ENCODE measurements at regions of chr1 and their contacts with region 1.

Region 1: GRCh38 chr1:59150577-59151391 is 146.1 kb upstream of the FGGY start:
- DNase-seq: peak; percentile 82 to 92
- H3K4me3 ChIP-seq: peak overlapping the region; percentile 48
- H3K27ac ChIP-seq: peak overlapping the region; percentile 72
- H3K4me1 ChIP-seq: peaks cover 66% of the 10 kb centered on the region
- H3K27me3 ChIP-seq: no peaks in the 10 kb centered on the region
- CTCF ChIP-seq: no peak

Region 2: GRCh38 chr1:59375321-59376220 is 224.8 kb after region 1 on chr1:
- CTCF ChIA-PET with region 1: interaction called, 13 read pairs
- POLR2A ChIA-PET with region 1: no interaction called
- intact Hi-C with region 1: no loop called
- DNase-seq: peak; percentile 25 to 54
- H3K4me3 ChIP-seq: no peak overlapping the region
- H3K27ac ChIP-seq: no peak overlapping the region
- H3K4me1 ChIP-seq: no peaks in the 10 kb centered on the region
- H3K27me3 ChIP-seq: no peaks in the 10 kb centered on the region
- CTCF ChIP-seq: no peak

Region 3: DNA sequence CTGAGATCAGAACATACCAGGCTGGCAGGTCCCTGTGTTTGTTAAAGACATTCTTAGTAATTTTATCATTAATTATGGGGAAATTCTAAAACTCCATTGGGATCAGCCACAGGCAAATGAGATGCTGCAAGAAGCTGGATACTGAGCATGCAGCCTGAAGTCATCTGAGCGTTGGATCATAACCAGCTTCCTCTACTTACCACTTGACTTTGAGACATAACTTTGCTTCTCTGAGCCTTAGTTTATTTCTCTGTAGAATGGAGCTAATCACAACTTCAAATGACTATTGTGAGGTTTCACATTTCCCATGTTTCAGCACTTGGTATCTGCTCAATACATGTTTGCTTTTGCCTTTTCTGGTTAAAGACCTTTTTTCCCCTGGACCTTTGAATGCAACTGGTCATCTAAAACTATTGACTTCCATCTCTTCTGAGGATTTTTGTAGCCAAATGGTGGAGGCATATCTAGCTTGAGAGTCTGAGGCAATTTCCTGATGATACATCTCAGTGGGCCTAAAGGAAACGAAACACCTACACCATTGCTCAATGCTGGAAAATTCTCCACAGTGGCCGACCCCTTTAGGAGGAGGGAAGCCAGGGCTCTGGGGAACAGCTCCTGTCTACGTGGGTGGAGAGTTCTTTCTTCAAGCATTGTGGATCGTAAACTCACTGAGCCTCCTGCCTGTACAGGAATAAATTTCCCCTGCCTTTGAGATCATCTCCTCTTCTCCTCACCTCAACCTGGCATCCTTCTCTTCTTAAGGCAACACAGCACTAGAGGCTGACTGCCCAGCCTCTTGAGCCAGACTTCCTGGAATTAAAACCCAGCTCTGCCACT is 554.9 kb after region 1 on chr1:
- CTCF ChIA-PET with region 1: no interaction called
- POLR2A ChIA-PET with region 1: interaction called, 12 read pairs
- intact Hi-C with region 1: no loop called
- DNase-seq: no peak
- H3K4me3 ChIP-seq: no peak overlapping the region
- H3K27ac ChIP-seq: no peak overlapping the region
- H3K4me1 ChIP-seq: peaks cover 10% of the 10 kb centered on the region; the same call in 1 of the 2 replicates
- H3K27me3 ChIP-seq: no peaks in the 10 kb centered on the region
- CTCF ChIP-seq: no peak